H1 (cell line): ENCODE measurements at regions of chr11 and their contacts with region 1.

Region 1: DNA sequence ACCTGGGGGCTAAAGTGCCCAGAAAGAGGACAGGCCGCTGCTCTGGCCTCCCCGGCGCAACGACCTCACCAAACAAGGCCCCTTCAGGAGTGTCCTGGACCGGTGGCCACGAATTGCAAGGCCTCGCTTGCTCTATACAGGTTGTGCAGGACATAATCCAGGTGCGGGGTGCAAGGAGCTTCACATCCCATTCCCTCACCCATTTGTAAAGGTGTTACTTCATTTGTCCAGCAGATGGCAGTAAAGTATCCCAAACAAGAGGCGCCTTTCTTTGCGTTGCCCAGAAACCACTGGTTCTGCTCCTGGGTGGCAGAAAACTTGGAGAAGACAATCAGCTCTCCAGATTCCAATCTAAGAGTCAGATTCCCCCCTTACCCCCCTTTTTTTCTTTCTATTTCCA is 35.9 kb upstream of the PRDM11 start:
- DNase-seq: peak in 1 of 2 experiments; percentile 56
- H3K4me3 ChIP-seq: no peak overlapping the region
- H3K27ac ChIP-seq: no peak overlapping the region
- H3K4me1 ChIP-seq: no peaks in the 10 kb centered on the region; a peak in 1 of 7 replicates
- H3K27me3 ChIP-seq: no peaks in the 10 kb centered on the region
- CTCF ChIP-seq: peak; percentile 22 to 82 (median 80)
- EP300 ChIP-seq: no peak
- POLR2A ChIP-seq: no peak
- RAD21 ChIP-seq: peak; percentile 91 to 94

Region 2: DNA sequence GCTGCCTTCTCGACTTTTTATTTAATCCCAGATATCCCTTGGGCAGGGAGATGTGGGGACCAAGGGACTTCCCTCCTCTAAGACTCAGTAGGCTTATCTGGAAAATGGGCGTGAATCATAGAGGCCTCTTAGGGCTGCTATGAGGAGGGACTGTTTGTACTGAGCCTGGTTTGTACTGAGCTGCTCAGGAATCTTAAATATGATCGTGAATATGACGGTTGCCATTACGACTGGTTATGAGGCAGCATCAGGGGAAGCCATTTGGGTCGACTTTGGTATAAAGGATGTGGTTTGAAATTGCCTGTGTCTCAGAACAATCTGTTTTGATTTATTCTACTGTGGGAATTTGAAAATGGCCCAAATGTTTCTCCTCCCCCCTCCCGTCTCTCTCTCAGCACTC is 363.2 kb before region 1 on chr11:
- CTCF ChIA-PET with region 1: no interaction called
- POLR2A ChIA-PET with region 1: no interaction called
- DNase-seq: no peak
- H3K4me3 ChIP-seq: no peak overlapping the region
- H3K27ac ChIP-seq: no peak overlapping the region
- H3K4me1 ChIP-seq: peaks cover 4 to 8% (median 7%) of the 10 kb centered on the region in 4 experiments; a peak in 5 of 7 replicates
- H3K27me3 ChIP-seq: peaks cover 0 to 13% (median 5%) of the 10 kb centered on the region in 4 experiments; a peak in 4 of 7 replicates
- CTCF ChIP-seq: no peak
- EP300 ChIP-seq: no peak
- POLR2A ChIP-seq: no peak
- RAD21 ChIP-seq: no peak

Region 3: DNA sequence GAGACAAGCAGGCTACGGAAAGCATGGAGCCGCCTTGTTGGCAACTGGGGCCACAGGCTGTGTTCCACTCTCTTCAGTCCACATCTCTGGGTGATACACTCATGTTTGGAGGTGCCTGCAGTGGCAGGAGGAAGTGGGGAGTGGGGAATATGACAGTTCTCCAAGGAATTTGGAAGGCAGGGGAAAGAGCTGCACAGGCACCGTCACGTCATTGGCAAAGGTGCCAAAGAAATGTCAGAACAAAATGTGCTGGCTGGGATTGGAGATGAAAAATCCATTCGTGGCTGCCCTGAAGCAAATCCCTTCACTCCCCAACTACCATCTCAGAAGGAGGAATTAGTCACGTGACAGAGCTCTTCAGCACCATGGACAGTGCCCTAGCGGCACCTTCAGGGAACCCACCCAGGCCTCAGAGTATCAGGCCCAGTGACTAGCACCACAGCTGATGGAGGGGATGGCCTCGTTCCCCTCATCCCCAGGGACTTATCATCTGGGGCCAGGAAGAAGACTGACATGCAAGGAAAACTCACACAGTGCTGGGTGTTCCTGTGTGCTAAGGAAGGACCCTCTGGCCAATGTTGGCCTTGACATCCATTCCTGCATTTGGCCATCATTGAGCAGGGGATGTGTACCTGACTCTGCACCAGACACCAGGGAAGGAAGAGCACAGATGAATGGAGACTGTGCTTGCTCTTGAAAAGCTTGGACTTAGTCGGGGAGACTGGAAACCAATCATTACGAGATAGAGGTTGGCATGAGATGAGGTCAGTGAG is 12.7 kb before region 1 on chr11:
- CTCF ChIA-PET with region 1: interaction called, 127 read pairs
- POLR2A ChIA-PET with region 1: no interaction called
- DNase-seq: peak in 1 of 2 experiments; percentile 94
- H3K4me3 ChIP-seq: no peak overlapping the region
- H3K27ac ChIP-seq: no peak overlapping the region
- H3K4me1 ChIP-seq: peaks cover under 1 to 4% (median 3%) of the 10 kb centered on the region in 4 experiments; a peak in 4 of 7 replicates
- H3K27me3 ChIP-seq: no peaks in the 10 kb centered on the region
- CTCF ChIP-seq: peak in 2 of 3 experiments; percentile 4 to 10; a peak in 1 of 4 replicates
- EP300 ChIP-seq: no peak
- POLR2A ChIP-seq: no peak
- RAD21 ChIP-seq: peak; percentile 28 to 29; a peak in 2 of 4 replicates

Region 4: DNA sequence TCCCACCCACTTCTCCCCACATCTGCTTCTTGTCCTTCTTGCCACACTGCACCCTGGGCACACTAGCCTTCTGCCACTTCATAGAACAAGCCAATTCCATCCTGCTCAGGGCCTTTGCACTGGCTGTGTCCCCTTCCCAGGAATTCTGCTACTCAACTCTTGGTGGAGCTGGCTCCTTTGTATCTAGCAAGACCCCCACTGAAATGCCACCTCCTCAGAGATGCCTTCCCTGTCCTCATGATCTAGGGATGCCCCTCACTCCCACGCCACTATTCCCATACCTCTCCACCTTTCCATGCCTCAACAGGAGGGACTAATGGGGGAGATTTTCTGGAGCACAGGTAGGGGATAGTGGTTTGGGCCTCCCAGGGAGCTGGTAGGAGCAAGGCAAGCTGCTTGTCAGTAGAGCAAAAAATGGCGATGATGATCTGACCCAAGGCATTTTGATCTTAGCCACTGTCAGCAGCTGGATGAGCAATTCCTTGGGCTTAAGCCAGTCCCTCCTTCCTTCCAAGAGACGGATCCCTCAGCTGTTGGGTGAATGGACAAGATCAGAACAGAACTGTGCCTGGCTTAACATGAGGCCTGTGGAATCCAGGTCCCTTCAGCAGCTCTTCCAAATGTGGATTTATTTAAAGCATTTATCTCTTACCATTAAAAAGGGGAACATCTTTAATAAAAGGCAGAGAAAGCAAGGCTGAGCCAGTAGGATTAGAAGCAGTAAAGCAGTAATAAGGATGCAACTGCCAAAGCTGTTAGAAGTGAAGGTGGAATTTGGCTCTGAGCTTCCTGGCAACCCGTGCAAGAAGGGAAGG is 31.9 kb after region 1 on chr11:
- CTCF ChIA-PET with region 1: interaction called, 14 read pairs
- POLR2A ChIA-PET with region 1: no interaction called
- DNase-seq: no peak
- H3K4me3 ChIP-seq: no peak overlapping the region
- H3K27ac ChIP-seq: no peak overlapping the region
- H3K4me1 ChIP-seq: peaks cover 0 to 5% (median 1%) of the 10 kb centered on the region in 4 experiments; a peak in 3 of 7 replicates
- H3K27me3 ChIP-seq: peaks cover 0 to 20% (median 10%) of the 10 kb centered on the region in 4 experiments; a peak in 5 of 7 replicates
- CTCF ChIP-seq: no peak
- EP300 ChIP-seq: no peak
- POLR2A ChIP-seq: no peak
- RAD21 ChIP-seq: no peak

Region 5: GRCh38 chr11:45180179-45180842 is 69.7 kb after region 1 on chr11:
- CTCF ChIA-PET with region 1: interaction called, 17 read pairs
- POLR2A ChIA-PET with region 1: no interaction called
- DNase-seq: peak in 1 of 2 experiments; percentile 81
- H3K4me3 ChIP-seq: peak overlapping the region; percentile 43 to 69 (median 46)
- H3K27ac ChIP-seq: no peak overlapping the region
- H3K4me1 ChIP-seq: peaks cover 0 to 17% (median 11%) of the 10 kb centered on the region in 4 experiments; a peak in 6 of 7 replicates
- H3K27me3 ChIP-seq: no peaks in the 10 kb centered on the region
- CTCF ChIP-seq: peak in 2 of 3 experiments; percentile 30 to 32; a peak in 2 of 4 replicates
- EP300 ChIP-seq: no peak
- POLR2A ChIP-seq: no peak
- RAD21 ChIP-seq: no peak

Region 6: DNA sequence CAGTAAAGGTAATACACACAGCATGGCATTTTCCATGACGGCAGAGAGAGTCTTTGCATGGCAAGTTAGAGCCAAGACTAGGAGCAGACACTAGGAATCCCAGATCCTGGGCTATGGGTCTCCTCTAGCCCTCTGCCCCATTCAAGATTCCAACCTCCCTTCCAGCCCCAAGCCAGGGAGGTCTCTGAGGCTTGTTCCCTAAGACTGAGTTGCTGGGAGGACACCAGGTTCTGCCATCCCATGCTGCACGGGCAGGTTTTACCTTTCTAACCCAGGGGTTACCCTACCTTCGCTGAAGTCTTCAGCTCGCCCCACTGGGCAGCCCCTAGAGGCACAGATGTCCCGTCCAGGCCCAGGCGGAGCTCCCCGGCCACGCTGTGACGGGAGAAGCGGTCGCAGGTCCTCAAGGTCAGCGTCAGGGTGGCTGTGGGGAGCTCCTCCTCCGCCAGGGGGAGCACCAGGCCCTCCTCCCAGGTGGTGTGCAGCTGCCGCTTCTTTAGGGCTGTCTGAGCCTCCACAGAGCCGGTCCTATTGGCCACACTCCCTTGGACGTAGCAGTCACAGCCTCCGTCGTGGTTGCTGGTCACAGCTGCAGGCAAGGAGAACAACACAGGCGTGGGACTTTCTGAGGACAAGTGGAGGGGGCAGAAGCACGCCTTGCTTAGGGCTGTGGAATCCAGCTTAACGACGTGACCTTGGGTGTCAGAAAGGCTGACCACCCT is 141.7 kb after region 1 on chr11:
- CTCF ChIA-PET with region 1: interaction called, 14 read pairs
- POLR2A ChIA-PET with region 1: no interaction called
- DNase-seq: peak; percentile 54 to 96
- H3K4me3 ChIP-seq: no peak overlapping the region
- H3K27ac ChIP-seq: no peak overlapping the region
- H3K4me1 ChIP-seq: no peaks in the 10 kb centered on the region; a peak in 1 of 7 replicates
- H3K27me3 ChIP-seq: no peaks in the 10 kb centered on the region
- CTCF ChIP-seq: peak; percentile 90 to 95 (median 92)
- EP300 ChIP-seq: no peak; a peak in 1 of 3 replicates
- POLR2A ChIP-seq: no peak
- RAD21 ChIP-seq: peak; percentile 83 to 86

Region 7: DNA sequence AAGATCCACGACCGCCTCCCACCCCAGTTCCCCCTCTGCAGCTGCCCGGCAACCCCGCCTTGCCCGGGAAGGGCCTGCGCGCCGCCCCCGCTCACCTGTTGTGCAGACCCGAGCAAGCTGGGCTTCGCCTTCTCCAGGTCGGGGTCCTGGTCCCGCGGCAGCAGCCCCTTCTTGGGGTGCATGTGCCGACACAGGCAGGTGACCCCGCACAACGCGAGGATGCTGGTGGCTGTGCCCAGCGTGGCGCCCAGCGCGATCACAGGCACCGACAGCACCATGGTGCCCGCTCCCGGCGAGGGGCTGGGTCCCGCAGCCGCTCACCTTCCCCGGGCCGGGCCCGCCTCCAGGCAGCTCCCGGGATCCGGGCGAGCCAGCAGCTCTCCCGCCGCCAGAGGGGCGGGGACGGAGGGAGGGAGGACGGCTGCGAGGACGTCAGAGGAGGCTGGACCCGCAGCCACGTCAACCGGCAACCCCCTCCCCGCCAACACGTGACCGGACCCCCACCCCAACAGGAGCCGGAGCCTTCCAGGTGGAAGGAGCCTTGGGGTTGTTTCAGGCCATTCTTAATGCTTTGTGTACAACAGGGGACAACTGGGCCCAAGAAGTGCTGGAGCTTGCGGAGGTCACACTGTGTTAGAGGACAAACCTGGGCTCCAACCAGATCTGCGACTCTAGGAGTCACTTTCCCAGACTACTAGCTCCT is 175.5 kb after region 1 on chr11 and contains the start of gene SYT13:
- CTCF ChIA-PET with region 1: interaction called, 18 read pairs
- POLR2A ChIA-PET with region 1: interaction called, 3 read pairs
- DNase-seq: peak; percentile 54 to 88
- H3K4me3 ChIP-seq: peak within 1 kb of the TSS; percentile 63 to 80 (median 70)
- H3K27ac ChIP-seq: no peak within 1 kb of the TSS
- H3K4me1 ChIP-seq: peaks cover 0 to 9% (median 3%) of the 10 kb centered on the region in 4 experiments; a peak in 5 of 7 replicates
- H3K27me3 ChIP-seq: peaks cover 2 to 18% (median 14%) of the 10 kb centered on the region in 4 experiments
- CTCF ChIP-seq: no peak
- EP300 ChIP-seq: no peak
- POLR2A ChIP-seq: peak in 1 of 2 experiments; percentile 49; a peak in 2 of 3 replicates
- RAD21 ChIP-seq: no peak
- total RNA-seq, gene SYT13: 12.3 and 13.2 TPM in 2 replicates

Region 8: DNA sequence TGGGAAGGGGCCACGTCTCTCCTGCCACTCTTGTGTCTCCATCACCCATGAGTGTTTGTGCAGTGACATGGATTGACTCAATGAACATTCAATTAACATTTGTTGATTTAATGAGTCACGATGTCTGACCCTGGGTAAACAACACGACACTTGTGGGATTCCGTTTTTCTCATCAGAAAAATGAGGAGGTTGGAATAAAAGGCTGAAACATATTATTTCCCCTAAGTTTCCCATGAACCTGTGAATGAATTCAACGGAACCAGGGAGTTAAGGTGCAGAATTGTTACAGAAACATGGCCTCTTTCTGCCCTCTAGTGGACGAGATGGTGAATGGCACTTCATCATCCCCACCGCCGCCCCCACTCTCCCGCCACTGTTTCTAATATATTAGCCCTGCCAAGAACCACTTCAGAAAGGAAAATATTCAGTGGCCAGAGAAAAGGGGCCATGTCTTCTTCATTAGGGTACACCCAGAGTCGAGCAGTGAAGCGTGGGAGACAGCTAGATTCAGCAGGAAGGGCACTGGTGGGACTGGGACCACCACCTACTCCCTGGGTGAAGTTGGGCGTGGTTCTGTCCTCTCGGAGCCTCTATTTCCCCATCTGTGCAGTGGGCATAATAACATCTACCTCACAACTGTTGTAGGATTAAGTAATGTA is 221.8 kb after region 1 on chr11:
- CTCF ChIA-PET with region 1: interaction called, 95 read pairs
- POLR2A ChIA-PET with region 1: no interaction called
- DNase-seq: peak in 1 of 2 experiments; percentile 68
- H3K4me3 ChIP-seq: no peak overlapping the region
- H3K27ac ChIP-seq: no peak overlapping the region
- H3K4me1 ChIP-seq: no peaks in the 10 kb centered on the region
- H3K27me3 ChIP-seq: no peaks in the 10 kb centered on the region; a peak in 1 of 7 replicates
- CTCF ChIP-seq: peak; percentile 44 to 65 (median 49)
- EP300 ChIP-seq: no peak
- POLR2A ChIP-seq: no peak
- RAD21 ChIP-seq: peak; percentile 80 to 82